Heart left ventricle (tissue), 16 donors: ENCODE measurements at regions of chr13 and their contacts with region 1.

Region 1: GRCh38 chr13:44237276-44237767 is 136.3 kb upstream of the SERP2 start:
- DNase-seq: peak in 4 of 5 donors; percentile 81 to 86 (median 83)
- ATAC-seq: peak; percentile 98 to 99 (median 99)
- H3K4me3 ChIP-seq: peak overlapping the region in 1 of 12 donors; percentile 0
- H3K27ac ChIP-seq: peak overlapping the region; percentile 79 to 97 (median 88)
- H3K4me1 ChIP-seq: peaks cover 14 to 38% (median 26%) of the 10 kb centered on the region in 12 donors
- H3K27me3 ChIP-seq: no peaks in the 10 kb centered on the region
- CTCF ChIP-seq: no peak
- POLR2A ChIP-seq: peak in 1 of 2 donors; percentile 49

Region 2: DNA sequence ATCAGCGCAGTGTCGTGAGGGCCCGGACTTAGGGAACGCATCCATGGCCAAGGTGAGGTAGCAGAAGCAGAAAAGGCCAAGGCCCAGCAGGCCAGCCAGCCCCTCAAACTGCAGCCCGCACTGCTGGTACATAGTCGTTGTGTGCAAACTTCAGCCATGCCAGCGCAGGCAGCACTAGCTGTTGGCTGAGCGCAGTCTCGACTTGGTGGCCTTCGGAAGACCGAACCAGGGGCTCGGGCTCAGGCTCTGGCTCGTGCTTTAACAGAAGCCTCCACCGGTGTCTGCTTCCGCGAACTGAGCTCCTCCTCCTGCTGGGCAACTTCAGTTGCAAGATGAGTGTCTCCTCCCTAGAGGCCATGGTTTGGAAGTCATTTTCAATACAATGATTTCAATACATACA is 1056.5 kb before region 1 on chr13:
- intact Hi-C with region 1: no loop called
- DNase-seq: no peak
- ATAC-seq: no peak
- H3K4me3 ChIP-seq: no peak overlapping the region
- H3K27ac ChIP-seq: no peak overlapping the region
- H3K4me1 ChIP-seq: no peaks in the 10 kb centered on the region
- H3K27me3 ChIP-seq: no peaks in the 10 kb centered on the region
- CTCF ChIP-seq: no peak
- POLR2A ChIP-seq: no peak

Region 3: GRCh38 chr13:43915451-43915850 is 321.9 kb before region 1 on chr13:
- intact Hi-C with region 1: loop called in 1 of 10 experiments (anchors 10 kb)
- DNase-seq: no peak
- ATAC-seq: no peak
- H3K4me3 ChIP-seq: no peak overlapping the region
- H3K27ac ChIP-seq: no peak overlapping the region
- H3K4me1 ChIP-seq: peaks cover 0 to 20% (median 10%) of the 10 kb centered on the region in 12 donors
- H3K27me3 ChIP-seq: peaks cover 0 to 38% (median 0%) of the 10 kb centered on the region in 9 donors
- CTCF ChIP-seq: no peak
- POLR2A ChIP-seq: no peak

Region 4: DNA sequence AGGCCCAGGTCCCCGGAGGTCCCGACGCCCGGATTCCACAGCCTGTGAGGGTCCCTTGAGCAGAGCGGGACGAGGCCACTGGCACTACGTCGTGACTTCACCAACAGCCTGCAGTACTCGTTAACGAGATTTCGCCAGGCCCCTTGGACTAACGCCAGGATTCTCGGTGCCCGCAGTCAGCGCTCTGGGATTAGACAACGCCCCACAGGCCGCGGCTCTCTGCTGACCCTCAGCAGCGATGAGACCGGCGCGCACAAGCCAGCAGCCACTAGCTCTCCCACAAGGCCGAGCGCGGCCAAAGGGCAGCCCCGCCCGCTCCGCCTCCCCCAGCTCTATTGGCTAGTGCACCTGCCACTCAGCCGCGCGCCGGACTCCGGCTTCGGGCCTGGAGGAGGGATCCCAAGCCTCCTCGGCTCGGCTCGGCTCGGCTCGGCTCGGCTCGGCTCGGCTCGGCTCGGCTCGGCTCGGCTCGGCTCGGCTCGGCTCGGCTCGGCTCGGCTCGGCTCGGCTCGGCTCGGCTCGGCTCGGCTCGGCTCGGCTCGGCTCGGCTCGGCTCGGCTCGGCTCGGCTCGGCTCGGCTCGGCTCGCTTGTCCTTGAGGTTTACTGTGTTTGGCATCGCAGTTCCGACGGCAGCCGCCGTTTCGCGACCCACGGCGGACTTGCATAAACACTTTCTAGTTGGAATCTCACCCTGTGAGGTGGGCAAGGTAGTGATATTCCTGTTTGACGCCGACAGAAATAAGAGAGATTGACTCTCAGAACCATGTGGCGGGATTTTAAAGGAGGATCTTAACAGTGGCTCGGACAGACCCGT is 95.4 kb before region 1 on chr13:
- intact Hi-C with region 1: loop called in 2 of 10 experiments (anchors 5 to 10 kb)
- DNase-seq: peak; percentile 98 to 100 (median 98)
- ATAC-seq: peak; percentile 99 to 100 (median 100)
- H3K4me3 ChIP-seq: peak overlapping the region; percentile 28 to 73 (median 58)
- H3K27ac ChIP-seq: peak overlapping the region; percentile 86 to 99 (median 96)
- H3K4me1 ChIP-seq: peaks cover 0 to 21% (median 9%) of the 10 kb centered on the region in 12 donors
- H3K27me3 ChIP-seq: no peaks in the 10 kb centered on the region
- CTCF ChIP-seq: peak in 1 of 12 donors; percentile 16
- POLR2A ChIP-seq: peak; percentile 84 to 94

Region 5: GRCh38 chr13:44191504-44192171 is 45.7 kb before region 1 on chr13:
- intact Hi-C with region 1: loop called in 5 of 10 experiments (anchors 2 to 5 kb)
- DNase-seq: peak in 4 of 5 donors; percentile 38 to 62 (median 58)
- ATAC-seq: peak; percentile 89 to 94 (median 94)
- H3K4me3 ChIP-seq: peak overlapping the region in 5 of 12 donors; percentile 9 to 28 (median 10)
- H3K27ac ChIP-seq: peak overlapping the region in 7 of 12 donors; percentile 13 to 62 (median 32)
- H3K4me1 ChIP-seq: peaks cover 0 to 7% (median 0%) of the 10 kb centered on the region in 12 donors
- H3K27me3 ChIP-seq: no peaks in the 10 kb centered on the region
- CTCF ChIP-seq: peak; percentile 57 to 85 (median 75)
- POLR2A ChIP-seq: no peak

Region 6: DNA sequence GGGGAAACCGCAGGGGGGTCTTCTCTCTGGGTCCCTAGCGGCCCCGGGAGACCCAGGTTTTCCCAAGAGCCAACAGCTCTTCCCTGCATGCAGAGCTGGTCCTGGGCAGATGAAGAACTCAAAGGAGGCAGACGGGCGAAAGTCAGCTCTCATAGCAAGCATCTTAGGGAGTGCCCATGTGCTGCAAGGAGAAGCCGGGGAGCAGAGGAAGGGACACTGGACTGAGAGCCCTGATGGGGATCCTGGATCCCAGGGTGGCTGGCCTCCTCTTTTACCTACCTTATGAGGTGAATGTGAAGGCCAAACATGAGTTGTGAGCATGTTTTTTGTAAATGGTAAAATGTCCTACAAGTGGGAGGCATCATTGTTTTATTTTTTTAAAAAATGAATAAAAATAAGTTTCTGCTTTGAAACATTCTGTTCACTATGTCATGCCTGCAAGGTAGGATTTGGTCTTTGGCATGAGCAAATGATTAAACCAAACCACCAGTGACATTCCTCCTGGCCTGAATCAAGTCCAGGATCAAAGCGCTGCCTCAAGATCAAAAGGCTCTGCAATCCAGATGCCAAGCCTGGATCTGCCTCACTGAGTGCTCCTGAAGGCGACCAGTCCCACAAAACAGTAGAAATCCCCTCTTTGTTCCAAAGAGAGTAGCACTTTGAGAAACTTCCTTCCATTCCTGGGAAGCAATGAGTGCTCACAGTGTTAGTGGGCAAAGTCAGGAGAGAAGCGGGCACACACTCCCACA is 44.1 kb after region 1 on chr13:
- intact Hi-C with region 1: no loop called
- DNase-seq: no peak
- ATAC-seq: no peak
- H3K4me3 ChIP-seq: no peak overlapping the region
- H3K27ac ChIP-seq: no peak overlapping the region
- H3K4me1 ChIP-seq: peaks cover 0 to 15% (median 5%) of the 10 kb centered on the region in 12 donors
- H3K27me3 ChIP-seq: no peaks in the 10 kb centered on the region
- CTCF ChIP-seq: no peak
- POLR2A ChIP-seq: no peak

Region 7: DNA sequence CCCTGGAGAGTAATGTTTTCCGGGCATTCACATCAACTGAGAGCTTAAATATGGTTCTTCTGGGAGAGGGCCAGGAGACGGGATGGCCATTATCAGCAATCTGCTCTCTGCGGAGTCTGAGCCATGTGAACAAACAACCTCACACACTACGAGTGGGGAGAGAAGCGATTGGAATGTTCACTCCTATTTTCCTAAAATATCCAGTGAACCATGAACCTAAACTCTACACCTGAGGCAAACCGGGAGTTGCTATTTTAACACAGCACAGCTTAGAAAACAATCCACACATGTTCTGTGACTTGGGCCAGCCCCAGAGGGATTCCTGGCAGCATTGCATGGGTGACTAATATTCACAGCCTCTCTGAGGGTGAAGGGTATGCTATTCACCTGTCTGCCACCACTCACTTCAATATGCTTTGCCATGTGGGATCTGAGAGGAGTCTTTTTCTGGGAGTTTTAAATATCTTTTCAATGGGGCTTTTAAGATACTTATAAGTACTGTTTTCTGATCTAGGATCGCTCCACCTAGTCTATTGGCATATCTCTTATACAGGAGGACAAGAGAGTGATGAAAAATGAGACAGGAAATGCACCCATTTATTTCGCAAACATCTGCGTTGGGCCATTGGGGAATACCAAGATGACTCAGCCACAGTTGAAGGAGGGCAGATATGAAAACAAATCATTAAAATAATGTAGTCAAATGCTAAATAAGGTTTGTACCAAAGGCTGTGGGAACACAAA is 63.7 kb after region 1 on chr13:
- intact Hi-C with region 1: loop called in 6 of 10 experiments (anchors 5 kb)
- DNase-seq: peak in 4 of 5 donors; percentile 54 to 66 (median 62)
- ATAC-seq: peak; percentile 67 to 91 (median 88)
- H3K4me3 ChIP-seq: no peak overlapping the region
- H3K27ac ChIP-seq: peak overlapping the region; percentile 48 to 87 (median 72)
- H3K4me1 ChIP-seq: peaks cover 8 to 66% (median 55%) of the 10 kb centered on the region in 12 donors
- H3K27me3 ChIP-seq: no peaks in the 10 kb centered on the region
- CTCF ChIP-seq: peak in 1 of 12 donors; percentile 6
- POLR2A ChIP-seq: no peak

Region 8: GRCh38 chr13:44306401-44307192 is 69.3 kb after region 1 on chr13:
- intact Hi-C with region 1: loop called in 6 of 10 experiments (anchors 5 kb)
- DNase-seq: peak; percentile 62 to 86 (median 77)
- ATAC-seq: peak; percentile 34 to 84 (median 61)
- H3K4me3 ChIP-seq: peak overlapping the region in 3 of 12 donors; percentile 3 to 20 (median 16)
- H3K27ac ChIP-seq: peak overlapping the region; percentile 69 to 96 (median 88)
- H3K4me1 ChIP-seq: peaks cover 18 to 81% (median 57%) of the 10 kb centered on the region in 12 donors
- H3K27me3 ChIP-seq: no peaks in the 10 kb centered on the region
- CTCF ChIP-seq: no peak
- POLR2A ChIP-seq: no peak